ENCODE measurements at regions of chr17 and their contacts with region 1.

Region 1: DNA sequence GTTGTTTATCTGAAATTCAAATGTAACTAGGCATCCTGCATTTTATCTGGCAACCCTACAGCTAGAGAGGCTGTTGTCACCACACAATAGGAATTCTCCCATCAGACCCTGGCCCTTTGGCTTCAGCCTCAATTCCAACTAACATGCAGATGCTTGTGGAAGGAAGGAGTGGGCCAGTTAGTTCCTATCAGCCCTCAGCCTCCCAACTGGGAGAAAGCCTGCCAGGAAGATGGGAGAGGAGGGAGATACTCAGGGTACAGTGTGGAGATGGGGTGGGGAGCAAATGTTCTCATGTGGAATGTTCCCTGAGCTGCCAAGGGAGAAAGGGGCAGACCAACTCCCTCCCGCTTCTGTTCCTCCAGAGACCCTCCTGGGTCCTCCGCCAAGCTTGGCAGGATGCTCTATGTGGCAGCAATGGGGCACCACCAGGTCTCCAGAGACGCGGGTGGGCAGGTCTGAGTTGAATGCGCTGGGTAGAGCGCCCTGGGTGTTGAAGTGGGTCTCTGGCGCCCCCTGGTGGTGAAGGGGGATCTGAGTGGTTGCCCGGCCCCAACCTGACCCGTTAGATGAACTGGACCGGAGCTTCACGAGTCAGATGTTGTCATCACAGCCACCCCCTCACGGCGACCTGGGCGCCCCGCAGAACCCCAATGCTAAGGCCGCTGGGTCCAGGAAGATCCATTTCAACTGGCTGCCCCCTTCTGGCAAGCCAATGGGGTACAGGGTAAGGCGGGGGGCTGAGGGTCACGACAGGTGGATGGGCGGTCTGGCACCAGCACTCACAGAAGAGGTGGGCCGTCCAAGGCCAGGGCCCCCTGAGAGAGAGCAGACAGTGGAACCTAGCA is 15.2 kb downstream of the GALK1 start:
- DNase-seq: peak; percentile 65 to 92 (median 82)
- ATAC-seq: peak; percentile 84
- H3K4me3 ChIP-seq: no peak overlapping the region
- H3K4me3 Mint-ChIP-seq: peak overlapping the region in 2 of 10 donors; percentile 25 to 44
- H3K27ac ChIP-seq: no peak overlapping the region
- H3K27ac Mint-ChIP-seq: peak overlapping the region in 2 of 9 donors; percentile 21 to 55
- H3K4me1 ChIP-seq: peaks cover 5 to 14% of the 10 kb centered on the region in 2 donors
- H3K4me1 Mint-ChIP-seq: peaks cover 9 to 21% (median 14%) of the 10 kb centered on the region in 7 donors
- H3K27me3 ChIP-seq: no peaks in the 10 kb centered on the region
- H3K27me3 Mint-ChIP-seq: peaks cover 0 to 5% (median 0%) of the 10 kb centered on the region in 5 donors

Region 2: GRCh38 chr17:75417054-75417580 is 332.6 kb before region 1 on chr17:
- CTCF ChIA-PET with region 1: no interaction called
- POLR2A ChIA-PET with region 1: no interaction called
- intact Hi-C with region 1: no loop called
- DNase-seq: no peak
- ATAC-seq: no peak
- H3K4me3 ChIP-seq: no peak overlapping the region
- H3K4me3 Mint-ChIP-seq: no peak overlapping the region
- H3K27ac ChIP-seq: no peak overlapping the region
- H3K27ac Mint-ChIP-seq: no peak overlapping the region
- H3K4me1 ChIP-seq: peaks cover 3 to 4% of the 10 kb centered on the region in 2 donors
- H3K4me1 Mint-ChIP-seq: peaks cover 4 to 16% (median 9%) of the 10 kb centered on the region in 7 donors
- H3K27me3 ChIP-seq: no peaks in the 10 kb centered on the region
- H3K27me3 Mint-ChIP-seq: peaks cover 0 to 38% (median 5%) of the 10 kb centered on the region in 5 donors

Region 3: GRCh38 chr17:75524953-75525719 is 224.6 kb before region 1 on chr17 and contains the start of gene LLGL2:
- CTCF ChIA-PET with region 1: no interaction called
- POLR2A ChIA-PET with region 1: no interaction called
- intact Hi-C with region 1: no loop called
- DNase-seq: peak; percentile 82 to 91 (median 89)
- ATAC-seq: peak; percentile 98
- H3K4me3 ChIP-seq: peak within 1 kb of the TSS; percentile 75
- H3K4me3 Mint-ChIP-seq: peak within 1 kb of the TSS; percentile 76 to 86 (median 82)
- H3K27ac ChIP-seq: peak within 1 kb of the TSS; percentile 67
- H3K27ac Mint-ChIP-seq: peak within 1 kb of the TSS in 7 of 9 donors; percentile 45 to 74 (median 59)
- H3K4me1 ChIP-seq: peaks cover 6 to 7% of the 10 kb centered on the region in 2 donors
- H3K4me1 Mint-ChIP-seq: peaks cover 0 to 20% (median 16%) of the 10 kb centered on the region in 7 donors
- H3K27me3 ChIP-seq: no peaks in the 10 kb centered on the region
- H3K27me3 Mint-ChIP-seq: peaks cover 0 to 11% (median 0%) of the 10 kb centered on the region in 5 donors
- total RNA-seq, gene LLGL2: 22.4 to 55.7 (median 33.7) TPM

Region 4: GRCh38 chr17:75589012-75589918 is 160.5 kb before region 1 on chr17:
- CTCF ChIA-PET with region 1: interaction called, 5 read pairs
- POLR2A ChIA-PET with region 1: interaction called, 6 read pairs
- intact Hi-C with region 1: loop called in 1 of 2 experiments (anchors 2 kb)
- DNase-seq: peak; percentile 81 to 98 (median 93)
- ATAC-seq: peak; percentile 94
- H3K4me3 ChIP-seq: peak overlapping the region; percentile 53
- H3K4me3 Mint-ChIP-seq: peak overlapping the region; percentile 57 to 95 (median 82)
- H3K27ac ChIP-seq: peak overlapping the region; percentile 83
- H3K27ac Mint-ChIP-seq: peak overlapping the region in 6 of 9 donors; percentile 59 to 95 (median 86)
- H3K4me1 ChIP-seq: peaks cover 0 to 2% of the 10 kb centered on the region in 2 donors
- H3K4me1 Mint-ChIP-seq: peaks cover 0 to 17% (median 11%) of the 10 kb centered on the region in 7 donors
- H3K27me3 ChIP-seq: no peaks in the 10 kb centered on the region
- H3K27me3 Mint-ChIP-seq: peaks cover 0 to 31% (median 0%) of the 10 kb centered on the region in 5 donors

Region 5: DNA sequence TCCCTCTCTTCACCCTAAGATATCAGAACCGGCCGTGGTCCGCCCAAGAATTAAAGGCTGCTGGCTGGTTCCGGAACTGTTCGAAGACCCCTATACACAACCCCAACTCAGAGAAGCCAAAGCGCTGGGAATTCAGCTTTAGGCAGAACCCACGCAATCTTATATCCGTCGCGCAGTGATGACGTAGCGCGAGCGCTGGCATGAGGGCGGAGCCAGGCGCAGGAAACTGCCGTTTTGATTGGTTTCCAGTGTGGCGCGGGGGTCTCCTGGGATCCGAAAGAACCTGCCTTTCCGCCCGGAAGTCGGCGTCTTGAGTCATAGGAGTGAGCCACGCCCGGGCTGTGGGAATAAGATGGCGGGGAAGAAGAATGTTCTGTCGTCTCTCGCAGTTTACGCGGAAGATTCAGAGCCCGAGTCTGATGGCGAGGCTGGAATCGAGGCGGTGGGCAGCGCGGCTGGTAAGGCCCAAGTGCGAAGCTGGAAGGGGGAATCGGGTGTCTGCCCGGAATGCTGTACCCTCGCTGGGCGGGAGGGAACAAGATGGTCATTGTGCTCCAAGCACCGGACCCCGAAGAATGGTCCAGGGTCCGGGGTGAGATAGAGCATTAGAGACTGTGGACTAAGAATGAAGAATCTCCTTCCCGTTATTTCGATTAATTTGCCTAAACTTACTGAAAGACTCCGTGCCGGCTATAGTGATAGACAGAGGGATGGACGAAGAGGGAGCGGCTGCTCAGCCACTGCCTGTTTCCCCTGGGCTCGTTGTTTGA is 82.6 kb before region 1 on chr17 and contains the starts of genes RECQL5 and SAP30BP:
- CTCF ChIA-PET with region 1: interaction called, 97 read pairs
- POLR2A ChIA-PET with region 1: interaction called, 9 read pairs
- intact Hi-C with region 1: loop called in 1 of 2 experiments (anchors 2 kb)
- DNase-seq: peak; percentile 94 to 98 (median 96)
- ATAC-seq: peak; percentile 100
- H3K4me3 ChIP-seq: peak within 1 kb of the TSS; percentile 99
- H3K4me3 Mint-ChIP-seq: peak within 1 kb of the TSS in 6 of 10 donors; percentile 59 to 74 (median 64)
- H3K27ac ChIP-seq: peak within 1 kb of the TSS; percentile 96
- H3K27ac Mint-ChIP-seq: peak within 1 kb of the TSS in 5 of 9 donors; percentile 6 to 83 (median 60)
- H3K4me1 ChIP-seq: peaks cover 21 to 26% of the 10 kb centered on the region in 2 donors
- H3K4me1 Mint-ChIP-seq: peaks cover 11 to 34% (median 21%) of the 10 kb centered on the region in 7 donors
- H3K27me3 ChIP-seq: no peaks in the 10 kb centered on the region
- H3K27me3 Mint-ChIP-seq: no peaks in the 10 kb centered on the region
- total RNA-seq, gene RECQL5: 38.7 to 76.5 (median 49.2) TPM
- total RNA-seq, gene SAP30BP: 97.6 to 198 (median 116) TPM

Region 6: DNA sequence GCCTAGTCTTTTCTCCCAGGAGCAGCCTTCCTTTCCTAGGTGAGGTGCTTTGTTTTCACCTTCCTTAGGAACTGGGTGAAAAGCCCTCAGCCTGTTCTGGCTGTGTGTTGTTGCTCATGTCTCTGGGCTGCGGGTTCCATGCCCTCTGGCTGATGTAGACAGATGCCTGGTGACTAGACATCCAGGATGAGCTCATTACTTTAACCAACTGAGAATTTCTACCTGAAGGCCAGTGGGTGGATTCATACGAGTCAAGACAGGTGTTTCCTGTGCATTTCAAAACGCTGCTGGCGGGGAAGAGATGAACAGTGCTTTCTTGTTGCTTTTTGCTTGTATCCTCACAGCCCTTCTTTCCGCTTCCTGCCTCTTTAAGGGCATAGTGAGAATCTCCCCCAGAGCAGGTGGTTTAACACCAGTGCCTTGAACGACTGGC is 60.3 kb before region 1 on chr17:
- CTCF ChIA-PET with region 1: interaction called, 16 read pairs
- POLR2A ChIA-PET with region 1: no interaction called
- intact Hi-C with region 1: no loop called
- DNase-seq: peak in 8 of 9 donors; percentile 31 to 85 (median 80)
- ATAC-seq: peak; percentile 86
- H3K4me3 ChIP-seq: no peak overlapping the region
- H3K4me3 Mint-ChIP-seq: peak overlapping the region; percentile 52 to 83 (median 68)
- H3K27ac ChIP-seq: peak overlapping the region; percentile 69
- H3K27ac Mint-ChIP-seq: peak overlapping the region; percentile 78 to 95 (median 93)
- H3K4me1 ChIP-seq: peaks cover 0 to 31% of the 10 kb centered on the region in 2 donors
- H3K4me1 Mint-ChIP-seq: peaks cover 39 to 69% (median 59%) of the 10 kb centered on the region in 7 donors
- H3K27me3 ChIP-seq: no peaks in the 10 kb centered on the region
- H3K27me3 Mint-ChIP-seq: no peaks in the 10 kb centered on the region

Region 7: DNA sequence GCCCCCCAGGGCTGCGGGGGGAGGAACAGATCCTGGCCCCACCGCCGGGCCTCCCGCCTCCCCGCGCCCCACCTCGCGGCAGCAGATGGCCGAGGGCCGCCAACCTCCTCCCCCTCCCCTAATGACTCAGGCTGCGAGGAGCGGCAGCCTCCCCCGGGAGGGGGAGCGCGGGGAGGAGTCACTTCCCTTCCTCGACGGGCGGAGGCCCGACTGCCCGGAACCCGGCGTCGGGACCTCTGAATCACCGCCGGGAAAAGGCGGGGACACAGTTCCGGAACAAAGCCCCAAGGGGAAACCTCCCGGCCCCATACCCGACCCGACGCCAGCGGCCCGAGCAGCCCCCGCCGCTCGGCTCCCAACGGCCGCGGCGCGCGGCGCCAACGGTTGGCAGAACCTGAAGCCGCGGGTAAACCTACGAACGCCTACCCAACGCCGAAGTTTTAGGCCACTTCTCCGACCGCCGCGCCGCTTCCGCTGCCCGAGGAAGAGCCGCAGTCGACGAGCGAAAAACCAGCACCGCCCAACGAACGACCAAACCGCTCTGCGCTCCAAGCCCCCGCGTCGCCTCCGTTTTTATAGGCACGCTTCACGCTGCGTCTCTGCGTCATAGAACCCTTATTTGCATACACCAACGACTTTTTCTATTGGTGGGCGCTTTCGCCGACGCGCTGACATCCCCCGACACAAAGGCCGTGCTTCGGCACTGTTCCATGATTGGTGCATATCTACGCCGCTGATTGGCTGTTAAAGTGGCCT is 29.6 kb after region 1 on chr17:
- CTCF ChIA-PET with region 1: interaction called, 15 read pairs
- POLR2A ChIA-PET with region 1: interaction called, 62 read pairs
- intact Hi-C with region 1: loop called in 1 of 2 experiments (anchors 2 kb)
- DNase-seq: peak; percentile 84 to 99 (median 96)
- ATAC-seq: peak; percentile 79
- H3K4me3 ChIP-seq: peak overlapping the region; percentile 85
- H3K4me3 Mint-ChIP-seq: peak overlapping the region; percentile 83 to 100 (median 98)
- H3K27ac ChIP-seq: peak overlapping the region; percentile 98
- H3K27ac Mint-ChIP-seq: peak overlapping the region; percentile 89 to 100 (median 99)
- H3K4me1 ChIP-seq: peaks cover 31 to 35% of the 10 kb centered on the region in 2 donors
- H3K4me1 Mint-ChIP-seq: peaks cover 19 to 68% (median 56%) of the 10 kb centered on the region in 7 donors
- H3K27me3 ChIP-seq: no peaks in the 10 kb centered on the region
- H3K27me3 Mint-ChIP-seq: peaks cover 0 to 3% (median 0%) of the 10 kb centered on the region in 5 donors

Region 8: DNA sequence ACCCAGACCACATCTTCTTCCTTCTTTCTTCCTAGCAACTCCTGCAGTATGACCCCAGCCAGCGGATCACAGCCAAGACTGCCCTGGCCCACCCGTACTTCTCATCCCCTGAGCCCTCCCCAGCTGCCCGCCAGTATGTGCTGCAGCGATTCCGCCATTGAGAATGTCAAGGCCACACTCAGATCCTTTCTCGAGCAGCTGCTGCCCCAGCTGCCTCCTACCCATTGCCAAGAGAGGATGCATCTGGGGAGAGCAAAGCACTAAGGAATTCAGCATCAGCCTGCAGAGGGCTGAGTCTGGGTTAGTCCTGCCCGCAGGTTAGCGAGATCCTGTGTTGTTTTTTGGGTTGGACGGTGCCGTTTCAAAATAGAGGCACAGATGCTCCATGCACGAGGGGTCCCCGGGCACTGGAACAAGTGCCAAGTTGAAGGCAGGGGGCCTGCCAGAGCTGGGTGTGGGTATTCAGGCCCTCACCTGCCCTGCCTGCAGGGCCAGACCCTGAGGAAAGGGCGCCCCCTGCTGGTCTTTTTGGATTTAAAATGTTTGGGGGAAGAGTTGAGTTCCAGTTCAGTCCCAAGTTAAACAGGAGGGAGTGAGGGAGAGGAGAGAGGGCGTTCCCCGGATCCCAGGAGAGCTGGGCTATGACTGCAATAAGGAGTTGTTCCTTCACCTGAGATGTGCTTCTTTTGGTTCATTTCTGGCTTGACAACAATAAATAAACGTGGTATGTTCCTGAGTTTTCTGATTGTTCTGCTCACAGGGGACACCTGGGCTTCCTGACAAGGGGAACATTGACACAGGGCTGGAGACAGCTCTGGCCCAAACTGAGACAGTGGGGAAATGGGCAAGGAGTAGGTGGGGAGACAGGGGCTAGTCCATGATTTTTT is 255.7 kb after region 1 on chr17:
- CTCF ChIA-PET with region 1: interaction called, 7 read pairs
- POLR2A ChIA-PET with region 1: no interaction called
- intact Hi-C with region 1: loop called in 1 of 2 experiments (anchors 2 kb)
- DNase-seq: peak; percentile 57 to 87 (median 73)
- ATAC-seq: peak; percentile 77
- H3K4me3 ChIP-seq: no peak overlapping the region
- H3K4me3 Mint-ChIP-seq: no peak overlapping the region
- H3K27ac ChIP-seq: no peak overlapping the region
- H3K27ac Mint-ChIP-seq: peak overlapping the region in 3 of 9 donors; percentile 47 to 65 (median 55)
- H3K4me1 ChIP-seq: no peaks in the 10 kb centered on the region
- H3K4me1 Mint-ChIP-seq: peaks cover 0 to 7% (median 4%) of the 10 kb centered on the region in 7 donors
- H3K27me3 ChIP-seq: no peaks in the 10 kb centered on the region
- H3K27me3 Mint-ChIP-seq: no peaks in the 10 kb centered on the region

Measured in naive thymus-derived CD4-positive, alpha-beta T cell (primary cell).